ENCODE measurements at regions of chr10 and their contacts with region 1.

Region 1: DNA sequence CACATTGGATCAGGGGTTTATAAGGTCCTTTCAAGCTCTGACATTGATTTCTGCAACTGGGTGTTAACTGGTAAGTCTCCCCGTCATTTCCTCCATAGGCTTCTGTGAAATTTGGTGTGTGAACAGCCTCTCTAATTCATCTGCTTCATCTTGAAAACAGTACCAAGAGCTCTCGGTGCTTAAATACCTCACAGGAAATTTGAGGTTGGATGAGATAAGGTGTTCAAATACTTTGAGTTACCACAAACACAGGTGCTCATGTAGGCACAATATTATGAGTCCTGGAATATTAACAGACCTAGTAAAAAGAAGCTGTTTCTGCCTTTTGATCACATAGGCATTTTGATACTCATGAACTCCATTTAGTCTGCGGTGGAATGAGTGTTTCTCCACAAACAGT is 85.2 kb downstream of the RTKN2 start:
- DNase-seq: peak; percentile 52
- H3K4me3 Mint-ChIP-seq: no peak overlapping the region
- H3K27ac Mint-ChIP-seq: peak overlapping the region; percentile 96
- H3K4me1 Mint-ChIP-seq: peaks cover 76% of the 10 kb centered on the region
- H3K27me3 Mint-ChIP-seq: no peaks in the 10 kb centered on the region

Region 2: GRCh38 chr10:61786728-61787127 is 396.7 kb before region 1 on chr10:
- intact Hi-C with region 1: loop called (anchors 10 kb)
- DNase-seq: no peak
- H3K4me3 Mint-ChIP-seq: no peak overlapping the region
- H3K27ac Mint-ChIP-seq: no peak overlapping the region
- H3K4me1 Mint-ChIP-seq: peaks cover 56% of the 10 kb centered on the region
- H3K27me3 Mint-ChIP-seq: no peaks in the 10 kb centered on the region

Region 3: GRCh38 chr10:61921143-61921542 is 262.3 kb before region 1 on chr10:
- intact Hi-C with region 1: no loop called
- DNase-seq: no peak
- H3K4me3 Mint-ChIP-seq: no peak overlapping the region
- H3K27ac Mint-ChIP-seq: no peak overlapping the region
- H3K4me1 Mint-ChIP-seq: peaks cover 29% of the 10 kb centered on the region
- H3K27me3 Mint-ChIP-seq: no peaks in the 10 kb centered on the region

Region 4: DNA sequence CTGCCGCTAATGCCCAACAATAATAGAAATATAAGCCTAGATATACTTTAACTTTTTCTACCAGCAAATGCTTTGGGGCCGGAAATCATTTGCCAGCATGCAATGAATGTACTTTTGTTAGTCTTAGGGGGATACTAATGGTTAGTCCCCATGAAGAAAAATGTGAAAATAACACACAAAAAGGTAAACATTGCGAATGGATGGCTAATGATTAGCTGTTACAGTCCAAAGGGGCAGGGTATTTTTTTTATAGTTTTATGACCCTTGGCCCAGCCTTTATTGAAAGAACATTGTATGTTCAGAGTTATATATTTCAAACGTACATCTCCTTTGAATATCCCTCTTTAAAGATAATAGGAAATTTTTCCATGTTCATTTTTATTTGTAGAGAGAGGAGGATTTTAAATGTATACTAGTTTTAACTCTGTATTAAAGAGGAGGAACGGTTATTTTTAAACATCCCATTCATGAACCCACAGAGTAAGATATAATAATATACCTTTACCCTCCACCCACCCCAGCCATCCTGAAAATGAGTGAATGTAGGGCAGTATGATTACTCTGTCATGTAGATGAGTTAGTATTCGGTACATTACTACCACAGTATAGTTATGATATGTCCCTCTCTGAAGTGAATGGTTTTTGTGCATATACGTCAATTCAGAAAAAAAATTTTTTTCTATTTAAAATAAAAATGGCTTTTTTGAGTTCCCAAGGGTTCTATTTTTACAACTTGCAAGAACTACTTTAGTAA is 218.3 kb before region 1 on chr10:
- intact Hi-C with region 1: loop called (anchors 1 kb)
- DNase-seq: no peak
- H3K4me3 Mint-ChIP-seq: no peak overlapping the region
- H3K27ac Mint-ChIP-seq: peak overlapping the region; percentile 76
- H3K4me1 Mint-ChIP-seq: peaks cover 76% of the 10 kb centered on the region
- H3K27me3 Mint-ChIP-seq: no peaks in the 10 kb centered on the region

Region 5: DNA sequence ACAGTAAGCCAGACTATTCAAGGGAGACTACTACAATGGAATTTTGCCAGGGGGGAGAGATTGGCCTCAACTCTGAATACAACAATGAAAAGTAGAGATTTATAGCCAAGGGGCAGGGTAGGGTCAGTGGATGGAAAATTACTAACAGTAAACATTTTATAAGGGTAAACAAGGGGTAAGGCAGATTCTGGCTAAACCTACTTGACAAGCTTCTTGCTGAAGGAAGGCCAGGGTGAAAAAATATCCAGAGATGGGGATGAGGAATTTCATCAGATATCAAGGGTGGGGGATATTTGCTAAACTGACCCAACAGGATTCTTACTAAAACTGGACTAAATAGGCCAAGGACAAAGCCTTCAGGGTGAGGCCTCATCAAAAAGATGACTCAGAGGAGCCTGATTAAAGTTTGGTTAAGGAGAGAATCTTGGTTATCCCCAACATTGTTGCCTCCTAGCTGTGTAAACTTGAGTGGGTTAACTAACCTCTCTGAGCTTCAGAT is 71.1 kb before region 1 on chr10:
- intact Hi-C with region 1: loop called (anchors 2 kb)
- DNase-seq: no peak
- H3K4me3 Mint-ChIP-seq: no peak overlapping the region
- H3K27ac Mint-ChIP-seq: no peak overlapping the region
- H3K4me1 Mint-ChIP-seq: peaks cover 35% of the 10 kb centered on the region
- H3K27me3 Mint-ChIP-seq: no peaks in the 10 kb centered on the region

Region 6: GRCh38 chr10:62130948-62131347 is 52.5 kb before region 1 on chr10:
- intact Hi-C with region 1: no loop called
- DNase-seq: no peak
- H3K4me3 Mint-ChIP-seq: no peak overlapping the region
- H3K27ac Mint-ChIP-seq: no peak overlapping the region
- H3K4me1 Mint-ChIP-seq: peaks cover 13% of the 10 kb centered on the region
- H3K27me3 Mint-ChIP-seq: no peaks in the 10 kb centered on the region

Region 7: DNA sequence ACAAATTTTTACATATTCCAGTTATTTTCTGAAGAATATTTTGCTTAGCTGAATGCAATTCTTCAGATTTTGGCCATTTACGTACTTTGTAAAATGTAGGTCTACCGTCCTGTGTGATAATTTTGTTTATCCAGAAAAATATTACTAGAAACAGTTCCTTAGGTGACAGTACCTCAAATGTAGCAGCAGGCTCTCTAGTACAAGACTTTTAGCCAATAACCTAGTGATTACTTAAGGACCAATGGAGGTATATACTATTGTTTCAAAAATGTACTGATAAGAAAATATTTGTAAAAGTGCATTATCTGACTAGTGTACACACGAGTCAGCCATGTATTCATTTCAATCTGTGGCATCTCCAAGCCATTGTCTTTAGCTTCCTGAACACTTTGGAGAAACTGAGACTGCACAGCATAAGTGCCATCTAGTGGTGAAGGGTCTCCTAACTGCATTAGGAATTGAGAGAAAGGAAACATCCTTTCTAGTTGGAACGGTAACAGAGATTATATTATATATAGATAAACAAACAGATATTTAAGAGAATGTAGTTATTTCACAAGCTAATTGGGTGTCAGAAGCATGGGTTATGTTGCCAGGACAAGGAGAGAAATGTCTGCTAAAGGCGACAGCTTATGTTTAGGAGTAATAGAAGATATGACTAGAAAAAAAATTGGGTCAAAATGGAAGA is 61.5 kb after region 1 on chr10:
- intact Hi-C with region 1: loop called (anchors 1 kb)
- DNase-seq: peak; percentile 39
- H3K4me3 Mint-ChIP-seq: no peak overlapping the region
- H3K27ac Mint-ChIP-seq: peak overlapping the region; percentile 63
- H3K4me1 Mint-ChIP-seq: peaks cover 32% of the 10 kb centered on the region
- H3K27me3 Mint-ChIP-seq: no peaks in the 10 kb centered on the region

Region 8: GRCh38 chr10:62816331-62817120 is 633.1 kb after region 1 on chr10 and contains the start of gene EGR2:
- intact Hi-C with region 1: loop called (anchors 5 kb)
- DNase-seq: peak; percentile 94
- H3K4me3 Mint-ChIP-seq: peak within 1 kb of the TSS; percentile 97
- H3K27ac Mint-ChIP-seq: peak within 1 kb of the TSS; percentile 100
- H3K4me1 Mint-ChIP-seq: peaks cover 45% of the 10 kb centered on the region
- H3K27me3 Mint-ChIP-seq: peaks cover 22% of the 10 kb centered on the region
- total RNA-seq, gene EGR2: 126 and 137 TPM in 2 replicates